Left ventricle myocardium superior (tissue), 1 donor: ENCODE measurements at regions of chr4 and their contacts with region 1.

Region 1: DNA sequence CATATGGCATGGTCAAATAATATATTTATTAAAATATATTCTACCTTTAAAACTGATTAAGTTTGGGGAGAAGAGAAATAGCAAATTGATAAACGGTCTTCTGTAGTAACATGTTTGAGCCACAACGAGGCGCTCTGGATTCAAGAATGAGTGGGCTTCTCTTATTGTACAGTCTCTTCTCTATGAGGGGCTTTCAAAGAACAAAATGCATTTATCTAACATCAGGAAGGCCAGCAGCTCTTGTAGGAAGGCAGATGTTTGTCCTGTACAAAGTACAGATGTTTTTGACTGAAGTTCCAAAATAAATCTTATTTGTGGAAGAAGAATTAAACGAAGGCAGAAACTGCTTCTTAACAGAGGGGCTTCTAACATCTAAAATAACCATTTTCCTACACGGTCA is 153.6 kb downstream of the RASL11B start:
- DNase-seq: no peak
- ATAC-seq: peak; percentile 31

Region 2: GRCh38 chr4:53132132-53132896 is 116.6 kb after region 1 on chr4:
- intact Hi-C with region 1: loop called (anchors 10 kb)
- DNase-seq: no peak
- ATAC-seq: peak; percentile 31

Region 3: DNA sequence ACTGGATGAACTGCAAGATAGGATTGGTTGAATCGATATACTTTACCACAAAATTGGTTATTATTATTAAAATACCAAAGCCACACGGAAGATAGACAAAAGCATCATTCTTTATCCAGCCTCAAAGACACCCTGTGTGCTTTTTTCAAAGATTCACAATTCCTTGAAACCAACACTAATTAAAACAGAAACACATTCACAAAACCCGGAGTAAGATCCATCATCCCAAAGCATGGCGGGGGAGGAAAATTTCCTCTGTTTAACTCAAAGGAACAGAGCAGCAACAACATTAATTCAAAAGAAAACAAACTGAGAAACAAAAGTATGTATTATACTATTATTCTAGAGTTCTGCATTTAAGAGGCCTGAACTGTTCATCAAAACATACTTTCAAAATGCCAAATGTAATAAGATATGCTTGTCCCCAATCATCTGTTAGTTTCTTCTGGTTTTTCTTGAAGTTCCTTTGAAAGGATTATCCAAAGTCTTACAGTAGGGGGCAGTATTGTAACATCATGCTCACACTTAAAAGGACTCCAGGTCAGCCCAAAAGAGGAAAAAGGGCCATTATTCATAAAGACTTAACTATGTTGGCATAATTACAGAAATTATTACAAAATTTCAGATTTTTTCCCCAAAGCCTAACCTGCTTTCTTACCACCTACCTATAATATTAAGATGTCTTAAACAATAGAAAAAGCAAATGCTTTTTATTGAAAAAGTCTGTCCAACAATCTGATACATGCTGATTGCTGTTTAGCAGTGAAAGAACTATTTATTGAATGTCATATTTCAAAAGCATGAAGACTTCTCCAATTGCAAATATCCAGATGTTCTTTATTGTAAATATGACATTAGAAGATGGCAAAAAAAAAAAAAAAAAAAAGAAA is 181.4 kb after region 1 on chr4:
- intact Hi-C with region 1: loop called (anchors 10 kb)
- DNase-seq: no peak
- ATAC-seq: peak; percentile 68

Region 4: GRCh38 chr4:54228056-54228527 is 1212.4 kb after region 1 on chr4:
- intact Hi-C with region 1: loop called (anchors 10 kb)
- DNase-seq: peak; percentile 84
- ATAC-seq: peak; percentile 68